PC-3 (cell line): ENCODE measurements at regions of chr6 and their contacts with region 1.

Region 1: DNA sequence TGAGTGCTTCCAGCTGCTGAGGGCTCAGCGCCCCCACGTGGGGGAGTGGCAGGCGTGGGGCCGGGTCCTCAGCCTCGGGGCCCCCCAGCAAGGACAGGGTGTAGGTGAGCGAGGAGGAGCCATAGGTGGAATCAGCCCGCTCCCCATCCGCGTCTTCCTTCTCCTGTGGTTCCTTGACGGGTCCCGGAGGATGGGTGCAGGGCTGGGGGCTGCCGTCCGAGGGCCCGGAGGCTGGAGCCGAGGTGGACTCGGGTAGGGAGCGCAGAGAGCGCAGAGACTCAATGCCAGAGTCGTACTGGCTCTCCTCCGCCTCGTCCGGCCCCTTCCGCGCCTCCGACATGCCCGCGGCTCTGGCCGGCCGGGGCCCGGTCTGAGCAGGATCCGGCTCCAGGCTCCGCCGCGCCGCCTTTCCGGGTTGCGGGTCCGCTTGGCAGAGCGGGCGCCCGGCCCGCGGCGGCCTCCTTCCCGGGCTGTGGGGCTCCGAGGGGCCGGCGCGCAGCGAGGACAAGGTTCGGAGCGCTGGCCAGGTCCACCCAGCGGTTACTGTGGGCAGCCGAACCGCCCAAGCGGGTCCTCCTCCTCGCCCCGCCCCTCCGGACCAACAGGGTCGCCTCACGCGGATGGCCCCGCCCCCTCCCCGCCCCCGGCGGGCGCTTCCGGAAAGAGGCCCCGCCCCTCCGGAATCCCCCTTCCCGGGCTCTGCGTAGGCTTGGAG is at the start of gene NFKBIE:
- DNase-seq: peak; percentile 92
- ATAC-seq: peak; percentile 79
- H3K4me3 ChIP-seq: peak within 1 kb of the TSS; percentile 80
- H3K27ac ChIP-seq: no peak within 1 kb of the TSS
- H3K4me1 ChIP-seq: peaks cover 23% of the 10 kb centered on the region
- H3K27me3 ChIP-seq: peaks cover 14% of the 10 kb centered on the region
- CTCF ChIP-seq: peak; percentile 45
- total RNA-seq, gene NFKBIE: 7.4 and 28.7 TPM in 2 replicates

Region 2: GRCh38 chr6:44304282-44305199 is 39.4 kb after region 1 on chr6:
- CTCF ChIA-PET with region 1: no interaction called
- POLR2A ChIA-PET with region 1: no interaction called
- intact Hi-C with region 1: loop called (anchors 5 kb)
- DNase-seq: peak; percentile 35
- ATAC-seq: peak; percentile 62
- H3K4me3 ChIP-seq: no peak overlapping the region
- H3K27ac ChIP-seq: no peak overlapping the region
- H3K4me1 ChIP-seq: no peaks in the 10 kb centered on the region
- H3K27me3 ChIP-seq: no peaks in the 10 kb centered on the region
- CTCF ChIP-seq: peak; percentile 77

Region 3: GRCh38 chr6:45049188-45049843 is 784.2 kb after region 1 on chr6:
- CTCF ChIA-PET with region 1: no interaction called
- POLR2A ChIA-PET with region 1: no interaction called
- intact Hi-C with region 1: no loop called
- DNase-seq: peak; percentile 51
- ATAC-seq: peak; percentile 72
- H3K4me3 ChIP-seq: no peak overlapping the region
- H3K27ac ChIP-seq: 0 out of 2 replicates have a peak overlapping the region, but pooled peaks have one; percentile 18
- H3K4me1 ChIP-seq: peaks cover 36% of the 10 kb centered on the region
- H3K27me3 ChIP-seq: no peaks in the 10 kb centered on the region
- CTCF ChIP-seq: no peak